ENCODE measurements at regions of chr20 and their contacts with region 1.

Region 1: GRCh38 chr20:17273717-17274116 is 46.9 kb downstream of the PCSK2 start:
- DNase-seq: no peak

Region 2: DNA sequence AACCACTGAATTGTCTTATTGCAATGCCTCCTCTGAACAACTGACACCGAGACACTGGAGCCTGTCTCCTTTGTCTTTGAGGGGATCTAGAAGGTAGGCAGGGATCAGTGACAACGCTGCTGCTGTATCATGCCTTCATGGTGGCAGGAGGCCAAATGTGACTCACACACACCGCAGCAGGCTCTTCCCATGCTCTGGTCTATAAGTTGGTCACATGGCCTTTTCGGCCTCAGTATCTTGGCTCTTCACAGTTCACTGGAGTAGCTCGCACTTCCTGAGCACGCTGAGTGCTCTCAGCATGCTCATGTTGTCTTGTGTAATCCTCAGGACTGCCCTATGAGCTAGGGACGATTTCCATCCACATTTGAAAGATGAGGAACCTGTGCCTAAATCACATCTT is 214.3 kb before region 1 on chr20:
- intact Hi-C with region 1: no loop called
- DNase-seq: no peak

Region 3: GRCh38 chr20:17129089-17129488 is 144.6 kb before region 1 on chr20:
- intact Hi-C with region 1: no loop called
- DNase-seq: no peak

Region 4: DNA sequence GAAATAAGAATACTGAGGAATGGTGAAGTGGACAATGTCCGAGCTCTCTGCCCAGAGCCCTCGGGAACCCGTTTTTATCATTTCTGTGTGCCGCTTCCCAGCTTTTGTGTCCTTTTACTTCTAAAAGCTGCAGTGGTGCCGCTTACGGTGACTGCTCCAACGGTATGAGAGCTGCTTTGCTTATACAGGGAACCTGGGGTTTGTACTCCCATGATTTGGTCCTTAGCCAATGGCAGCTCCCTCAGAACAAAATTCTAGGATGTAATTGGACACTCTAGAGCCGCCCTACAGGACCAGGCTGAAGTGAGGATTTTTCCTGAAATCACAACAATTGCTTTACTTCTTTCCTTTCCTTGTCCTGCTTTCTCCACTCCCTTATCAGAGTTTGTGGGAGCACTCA is 71.0 kb before region 1 on chr20:
- intact Hi-C with region 1: loop called (anchors 5 kb)
- DNase-seq: peak in 1 of 10 donors; percentile 70